ENCODE measurements at regions of chr11 and their contacts with region 1.

Region 1: DNA sequence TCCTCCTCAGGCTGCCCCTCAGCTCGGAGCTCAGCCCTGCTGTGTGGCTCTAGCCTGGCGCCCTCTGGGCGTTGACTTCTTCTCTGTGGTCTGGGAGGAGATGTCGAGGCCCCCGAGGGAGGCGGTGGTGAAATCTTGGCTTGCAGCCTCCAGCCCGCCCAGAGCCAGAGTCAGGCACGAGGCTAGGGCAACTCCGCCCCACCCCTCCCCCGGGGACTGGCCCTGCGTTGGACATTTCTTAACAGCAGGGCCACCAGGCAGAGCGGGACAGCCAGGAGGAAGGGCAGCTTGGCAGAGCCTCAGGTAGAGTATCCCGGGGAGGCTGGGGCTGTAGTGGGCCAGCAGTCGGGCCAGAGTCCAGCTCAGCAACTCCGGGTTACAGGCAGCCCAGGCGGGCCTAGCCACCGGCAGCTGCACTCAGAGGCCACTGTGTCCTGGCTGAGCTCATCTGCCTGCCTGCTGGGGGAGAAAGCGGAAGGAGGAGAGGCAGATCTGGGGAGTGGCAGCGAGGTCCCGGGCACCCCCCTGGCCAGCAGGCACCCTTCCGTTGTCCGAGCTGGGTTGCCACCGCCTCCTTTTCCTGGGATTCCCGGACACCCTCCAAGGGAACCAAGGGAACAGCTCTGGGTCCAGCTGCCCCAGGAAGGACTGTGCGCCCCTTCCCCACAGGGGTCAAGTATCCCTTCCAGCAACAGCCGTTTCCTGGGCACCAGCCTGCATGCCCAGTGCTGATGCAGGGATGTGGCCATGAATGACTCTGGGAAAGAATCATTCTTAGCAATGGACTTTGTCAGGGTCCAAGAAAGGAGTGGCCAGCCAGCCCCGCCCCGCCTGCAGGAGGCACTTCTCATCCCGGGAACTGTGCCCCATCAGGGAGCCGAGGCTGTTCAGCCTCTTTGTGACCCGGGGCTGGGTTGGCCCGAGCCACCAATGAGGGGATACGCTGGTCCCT is at the start of gene ALDH3B1:
- DNase-seq: peak in 1 of 2 experiments; percentile 72
- H3K4me3 ChIP-seq: no peak within 1 kb of the TSS
- H3K27ac ChIP-seq: no peak within 1 kb of the TSS
- H3K4me1 ChIP-seq: peaks cover 0 to 15% (median 12%) of the 10 kb centered on the region in 4 experiments; a peak in 6 of 7 replicates
- H3K27me3 ChIP-seq: no peaks in the 10 kb centered on the region
- CTCF ChIP-seq: no peak
- EP300 ChIP-seq: no peak
- POLR2A ChIP-seq: no peak
- RAD21 ChIP-seq: no peak
- total RNA-seq, gene ALDH3B1: 0.27 and 0.32 TPM in 2 replicates

Region 2: DNA sequence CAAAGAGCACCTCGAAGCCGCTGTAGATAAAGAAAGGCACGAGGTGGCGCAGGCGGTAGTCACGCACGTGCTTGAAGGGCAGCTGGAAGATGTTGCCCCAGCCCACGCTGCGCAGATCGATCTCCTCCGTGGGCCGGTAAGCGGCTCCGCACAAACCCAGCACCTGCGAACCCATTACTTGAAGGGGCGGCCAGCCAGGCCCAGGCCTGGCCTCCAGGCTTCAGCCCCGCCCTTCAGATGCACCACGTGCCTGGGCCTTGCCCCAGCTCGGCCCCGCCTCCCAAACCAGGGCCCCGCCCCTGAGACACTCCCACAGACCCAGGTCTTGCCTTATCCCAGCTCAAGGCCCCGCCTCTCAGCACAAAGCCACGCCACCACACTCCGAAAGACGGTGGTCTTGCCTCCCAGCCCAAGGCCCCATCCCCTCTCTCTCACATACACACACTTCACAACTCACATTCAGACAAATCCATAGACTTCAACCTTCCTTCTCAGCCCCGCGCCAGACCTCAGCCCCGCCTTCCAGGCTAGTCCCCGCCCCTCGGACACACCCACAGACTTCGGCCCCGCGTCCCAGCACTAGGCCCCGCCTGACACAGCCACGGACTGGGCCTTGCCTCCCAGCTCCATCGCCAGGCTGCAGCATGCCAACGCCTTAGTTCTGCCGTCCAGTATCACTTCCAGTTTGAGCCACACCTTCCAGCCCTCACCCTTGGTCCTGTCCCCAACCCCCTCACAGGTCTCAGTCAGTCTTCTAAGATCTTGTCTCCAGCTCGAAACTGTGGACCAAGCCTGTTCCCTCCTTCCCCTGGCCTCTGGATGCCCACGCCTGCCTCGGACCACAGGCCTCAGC is 13.5 kb before region 1 on chr11:
- CTCF ChIA-PET with region 1: interaction called, 20 read pairs
- POLR2A ChIA-PET with region 1: interaction called, 4 read pairs
- DNase-seq: peak; percentile 85 to 99
- H3K4me3 ChIP-seq: peak overlapping the region; percentile 49 to 68 (median 60); a peak in 7 of 8 replicates
- H3K27ac ChIP-seq: no peak overlapping the region
- H3K4me1 ChIP-seq: peaks cover 0 to 9% (median 8%) of the 10 kb centered on the region in 4 experiments; a peak in 5 of 7 replicates
- H3K27me3 ChIP-seq: no peaks in the 10 kb centered on the region
- CTCF ChIP-seq: no peak
- EP300 ChIP-seq: no peak
- POLR2A ChIP-seq: 0 out of 3 replicates have a peak, but pooled peaks of 1 of the 2 experiments have one; percentile 17
- RAD21 ChIP-seq: no peak

Region 3: GRCh38 chr11:68020575-68020974 is 10.2 kb after region 1 on chr11:
- CTCF ChIA-PET with region 1: interaction called, 40 read pairs
- POLR2A ChIA-PET with region 1: interaction called, 17 read pairs
- DNase-seq: peak in 1 of 2 experiments; percentile 71
- H3K4me3 ChIP-seq: no peak overlapping the region
- H3K27ac ChIP-seq: no peak overlapping the region
- H3K4me1 ChIP-seq: peaks cover 0 to 12% (median 4%) of the 10 kb centered on the region in 4 experiments; a peak in 4 of 7 replicates
- H3K27me3 ChIP-seq: no peaks in the 10 kb centered on the region
- CTCF ChIP-seq: peak in 2 of 3 experiments; percentile 67 to 83; a peak in 3 of 4 replicates
- EP300 ChIP-seq: no peak
- POLR2A ChIP-seq: no peak
- RAD21 ChIP-seq: peak; percentile 45 to 59

Region 4: GRCh38 chr11:68038718-68039525 is 28.6 kb after region 1 on chr11 and contains the start of gene TCIRG1:
- CTCF ChIA-PET with region 1: interaction called, 6 read pairs
- POLR2A ChIA-PET with region 1: interaction called, 14 read pairs
- DNase-seq: peak; percentile 47 to 77
- H3K4me3 ChIP-seq: peak within 1 kb of the TSS; percentile 22 to 66 (median 42)
- H3K27ac ChIP-seq: 0 out of 2 replicates have a peak within 1 kb of the TSS, but pooled peaks have one; percentile 24
- H3K4me1 ChIP-seq: peaks cover 4 to 25% (median 20%) of the 10 kb centered on the region in 4 experiments
- H3K27me3 ChIP-seq: no peaks in the 10 kb centered on the region
- CTCF ChIP-seq: peak in 1 of 3 experiments; percentile 5; a peak in 1 of 4 replicates
- EP300 ChIP-seq: no peak
- POLR2A ChIP-seq: peak in 1 of 2 experiments; percentile 46; a peak in 2 of 3 replicates
- RAD21 ChIP-seq: no peak
- total RNA-seq, gene TCIRG1: 25.3 and 25.7 TPM in 2 replicates

Region 5: DNA sequence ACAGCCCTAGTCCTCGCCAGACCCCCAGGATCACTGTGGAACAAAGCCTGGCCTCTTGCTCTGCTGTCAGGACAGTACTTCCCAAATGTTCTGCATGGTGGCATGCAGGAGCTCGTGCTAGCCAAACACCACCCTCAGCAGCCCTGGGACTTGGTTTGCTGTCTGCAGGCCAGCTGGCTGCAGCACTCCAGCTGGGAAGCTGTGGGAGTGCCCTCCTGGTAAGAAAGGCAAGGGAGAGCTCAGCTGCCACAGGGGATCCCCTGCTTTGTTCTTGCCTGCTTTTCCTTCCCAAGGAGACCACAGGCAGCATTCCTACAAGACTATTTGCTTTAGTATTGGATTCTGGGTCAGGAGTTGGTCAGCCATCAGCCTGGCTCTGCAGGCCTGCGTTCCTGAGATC is 56.4 kb after region 1 on chr11:
- CTCF ChIA-PET with region 1: no interaction called
- POLR2A ChIA-PET with region 1: no interaction called
- DNase-seq: no peak
- H3K4me3 ChIP-seq: no peak overlapping the region
- H3K27ac ChIP-seq: no peak overlapping the region
- H3K4me1 ChIP-seq: no peaks in the 10 kb centered on the region
- H3K27me3 ChIP-seq: no peaks in the 10 kb centered on the region
- CTCF ChIP-seq: no peak
- EP300 ChIP-seq: no peak
- POLR2A ChIP-seq: no peak
- RAD21 ChIP-seq: no peak

Measured in H1 (cell line).